ENCODE measurements at regions of chr22 and their contacts with region 1.

Region 1: GRCh38 chr22:39319270-39320022 is at the start of gene RPL3:
- DNase-seq: peak; percentile 77 to 95 (median 84)
- ATAC-seq: peak; percentile 79
- H3K4me3 ChIP-seq: peak within 1 kb of the TSS; percentile 69
- H3K27ac ChIP-seq: peak within 1 kb of the TSS; percentile 100
- H3K4me1 ChIP-seq: peaks cover 13 to 20% of the 10 kb centered on the region in 2 experiments; a peak in 4 of 5 replicates
- H3K27me3 ChIP-seq: no peaks in the 10 kb centered on the region
- CTCF ChIP-seq: 0 out of 6 replicates have a peak, but pooled peaks of 1 of the 3 experiments have one; percentile 12
- EP300 ChIP-seq: peak; percentile 25; the same call in 1 of the 2 replicates
- POLR2A ChIP-seq: peak; percentile 100
- RAD21 ChIP-seq: no peak
- polyA plus RNA-seq, gene RPL3: 3,338 to 4,066 TPM

Region 2: GRCh38 chr22:39021552-39022250 is 297.7 kb before region 1 on chr22:
- CTCF ChIA-PET with region 1: no interaction called
- POLR2A ChIA-PET with region 1: no interaction called
- in situ Hi-C with region 1: no loop called
- intact Hi-C with region 1: no loop called
- DNase-seq: peak in 1 of 4 experiments; percentile 23
- ATAC-seq: no peak
- H3K4me3 ChIP-seq: peak overlapping the region; percentile 60
- H3K27ac ChIP-seq: peak overlapping the region; percentile 79
- H3K4me1 ChIP-seq: peaks cover 13 to 46% of the 10 kb centered on the region in 2 experiments; a peak in 4 of 5 replicates
- H3K27me3 ChIP-seq: no peaks in the 10 kb centered on the region
- CTCF ChIP-seq: no peak
- EP300 ChIP-seq: no peak
- POLR2A ChIP-seq: no peak
- RAD21 ChIP-seq: no peak

Region 3: GRCh38 chr22:39135090-39135896 is 184.2 kb before region 1 on chr22:
- CTCF ChIA-PET with region 1: interaction called, 4 read pairs
- POLR2A ChIA-PET with region 1: interaction called, 20 read pairs
- in situ Hi-C with region 1: no loop called
- intact Hi-C with region 1: no loop called
- DNase-seq: peak; percentile 64 to 71 (median 70)
- ATAC-seq: peak; percentile 95
- H3K4me3 ChIP-seq: no peak overlapping the region
- H3K27ac ChIP-seq: no peak overlapping the region
- H3K4me1 ChIP-seq: peaks cover 13 to 28% of the 10 kb centered on the region in 2 experiments
- H3K27me3 ChIP-seq: no peaks in the 10 kb centered on the region
- CTCF ChIP-seq: peak; percentile 70 to 79 (median 78)
- EP300 ChIP-seq: no peak
- POLR2A ChIP-seq: no peak
- RAD21 ChIP-seq: peak; percentile 33 to 67

Region 4: GRCh38 chr22:39178206-39179111 is 141.0 kb before region 1 on chr22:
- CTCF ChIA-PET with region 1: no interaction called
- POLR2A ChIA-PET with region 1: interaction called, 24 read pairs
- in situ Hi-C with region 1: no loop called
- intact Hi-C with region 1: no loop called
- DNase-seq: no peak
- ATAC-seq: no peak
- H3K4me3 ChIP-seq: no peak overlapping the region
- H3K27ac ChIP-seq: no peak overlapping the region
- H3K4me1 ChIP-seq: peaks cover 13 to 33% of the 10 kb centered on the region in 2 experiments; a peak in 4 of 5 replicates
- H3K27me3 ChIP-seq: no peaks in the 10 kb centered on the region
- CTCF ChIP-seq: no peak
- EP300 ChIP-seq: no peak
- POLR2A ChIP-seq: no peak
- RAD21 ChIP-seq: no peak

Region 5: DNA sequence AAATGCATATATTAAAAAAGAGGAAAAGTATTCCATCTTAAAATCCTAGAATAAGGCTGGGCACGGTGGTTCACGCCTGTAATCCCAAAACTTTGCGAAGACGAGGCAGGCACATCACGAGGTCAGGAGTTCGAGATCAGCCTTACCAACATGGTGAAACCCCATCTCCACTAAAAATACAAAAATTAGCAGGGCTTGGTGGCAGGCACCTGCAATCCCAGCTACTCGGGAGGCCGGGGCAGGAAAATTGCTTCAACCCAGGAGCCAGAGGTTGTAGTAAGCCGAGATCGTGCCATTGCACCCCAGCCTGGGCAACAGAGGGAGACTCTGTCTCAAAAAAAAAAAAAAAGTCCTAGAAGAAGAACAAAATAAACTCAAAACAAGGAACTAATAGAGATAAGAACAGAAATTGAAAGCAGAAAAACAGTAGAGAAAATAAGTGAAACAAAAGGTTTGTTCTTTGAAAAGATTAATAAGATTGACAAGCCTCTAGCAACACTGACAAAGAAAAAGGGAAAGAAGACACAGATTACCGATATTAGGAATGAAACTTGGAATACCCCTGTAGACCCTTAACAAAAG is 122.0 kb before region 1 on chr22:
- CTCF ChIA-PET with region 1: no interaction called
- POLR2A ChIA-PET with region 1: no interaction called
- in situ Hi-C with region 1: no loop called
- intact Hi-C with region 1: no loop called
- DNase-seq: no peak
- ATAC-seq: no peak
- H3K4me3 ChIP-seq: no peak overlapping the region
- H3K27ac ChIP-seq: no peak overlapping the region
- H3K4me1 ChIP-seq: no peaks in the 10 kb centered on the region; a peak in 1 of 5 replicates
- H3K27me3 ChIP-seq: no peaks in the 10 kb centered on the region
- CTCF ChIP-seq: no peak
- EP300 ChIP-seq: no peak
- POLR2A ChIP-seq: no peak
- RAD21 ChIP-seq: no peak

Region 6: GRCh38 chr22:39273950-39274887 is 45.2 kb before region 1 on chr22:
- CTCF ChIA-PET with region 1: no interaction called
- POLR2A ChIA-PET with region 1: no interaction called
- in situ Hi-C with region 1: no loop called
- intact Hi-C with region 1: no loop called
- DNase-seq: peak; percentile 70 to 86 (median 80)
- ATAC-seq: peak; percentile 75
- H3K4me3 ChIP-seq: no peak overlapping the region
- H3K27ac ChIP-seq: no peak overlapping the region
- H3K4me1 ChIP-seq: peaks cover 10 to 33% of the 10 kb centered on the region in 2 experiments; a peak in 3 of 5 replicates
- H3K27me3 ChIP-seq: no peaks in the 10 kb centered on the region
- CTCF ChIP-seq: no peak
- EP300 ChIP-seq: peak; percentile 66; the same call in 1 of the 2 replicates
- POLR2A ChIP-seq: no peak
- RAD21 ChIP-seq: no peak

Region 7: GRCh38 chr22:39300186-39300830 is 19.1 kb before region 1 on chr22:
- CTCF ChIA-PET with region 1: no interaction called
- POLR2A ChIA-PET with region 1: interaction called, 59 read pairs
- in situ Hi-C with region 1: no loop called
- intact Hi-C with region 1: no loop called
- DNase-seq: no peak
- ATAC-seq: peak; percentile 73
- H3K4me3 ChIP-seq: no peak overlapping the region
- H3K27ac ChIP-seq: 0 out of 3 replicates have a peak overlapping the region, but pooled peaks have one; percentile 4
- H3K4me1 ChIP-seq: peaks cover 8 to 32% of the 10 kb centered on the region in 2 experiments; a peak in 4 of 5 replicates
- H3K27me3 ChIP-seq: no peaks in the 10 kb centered on the region
- CTCF ChIP-seq: no peak; a peak in 1 of 6 replicates
- EP300 ChIP-seq: no peak
- POLR2A ChIP-seq: no peak
- RAD21 ChIP-seq: no peak

Region 8: DNA sequence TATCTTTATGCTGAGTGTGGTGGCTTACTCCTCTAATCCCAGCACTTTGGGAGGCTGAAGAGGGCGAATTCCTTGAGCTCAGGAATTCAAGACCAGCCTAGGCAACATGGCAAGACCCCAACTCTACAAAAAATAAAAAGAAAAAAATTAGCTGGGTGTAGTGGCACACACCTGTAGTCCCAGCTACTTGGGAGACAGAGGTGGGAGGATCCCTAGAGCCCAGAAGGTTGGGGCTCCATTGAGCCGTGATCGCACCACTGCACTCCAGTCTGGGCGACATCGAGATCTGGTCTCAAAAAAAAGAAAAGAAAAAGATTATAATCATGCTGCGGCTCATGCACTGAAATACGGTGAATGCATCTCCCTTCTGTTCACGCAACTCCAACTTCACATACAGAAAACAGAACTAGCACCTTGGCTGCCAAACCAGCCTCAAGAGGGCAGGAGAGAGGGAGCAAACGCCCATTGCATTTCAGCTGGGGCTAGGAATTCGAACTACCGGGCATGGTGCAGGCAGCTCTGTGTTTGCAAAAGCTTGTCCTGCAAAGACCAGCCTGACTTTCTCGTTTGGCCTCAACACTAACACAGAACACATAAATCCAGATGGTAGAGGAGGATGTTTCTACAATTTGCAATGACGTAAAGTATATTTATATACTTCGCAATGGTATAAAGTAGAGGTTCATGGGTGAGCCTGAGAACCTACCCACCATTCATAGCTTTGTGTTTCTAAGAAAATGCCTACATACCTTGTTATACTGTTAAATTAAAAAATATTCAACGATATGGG is 24.0 kb after region 1 on chr22:
- CTCF ChIA-PET with region 1: no interaction called
- POLR2A ChIA-PET with region 1: interaction called, 20 read pairs
- in situ Hi-C with region 1: no loop called
- intact Hi-C with region 1: no loop called
- DNase-seq: peak; percentile 43 to 70 (median 56)
- ATAC-seq: peak; percentile 96
- H3K4me3 ChIP-seq: no peak overlapping the region
- H3K27ac ChIP-seq: no peak overlapping the region
- H3K4me1 ChIP-seq: peaks cover 0 to 5% of the 10 kb centered on the region in 2 experiments; a peak in 3 of 5 replicates
- H3K27me3 ChIP-seq: no peaks in the 10 kb centered on the region
- CTCF ChIP-seq: peak; percentile 65 to 77 (median 75)
- EP300 ChIP-seq: no peak
- POLR2A ChIP-seq: no peak
- RAD21 ChIP-seq: peak in 1 of 2 experiments; percentile 51; a peak in 3 of 4 replicates

Region 9: DNA sequence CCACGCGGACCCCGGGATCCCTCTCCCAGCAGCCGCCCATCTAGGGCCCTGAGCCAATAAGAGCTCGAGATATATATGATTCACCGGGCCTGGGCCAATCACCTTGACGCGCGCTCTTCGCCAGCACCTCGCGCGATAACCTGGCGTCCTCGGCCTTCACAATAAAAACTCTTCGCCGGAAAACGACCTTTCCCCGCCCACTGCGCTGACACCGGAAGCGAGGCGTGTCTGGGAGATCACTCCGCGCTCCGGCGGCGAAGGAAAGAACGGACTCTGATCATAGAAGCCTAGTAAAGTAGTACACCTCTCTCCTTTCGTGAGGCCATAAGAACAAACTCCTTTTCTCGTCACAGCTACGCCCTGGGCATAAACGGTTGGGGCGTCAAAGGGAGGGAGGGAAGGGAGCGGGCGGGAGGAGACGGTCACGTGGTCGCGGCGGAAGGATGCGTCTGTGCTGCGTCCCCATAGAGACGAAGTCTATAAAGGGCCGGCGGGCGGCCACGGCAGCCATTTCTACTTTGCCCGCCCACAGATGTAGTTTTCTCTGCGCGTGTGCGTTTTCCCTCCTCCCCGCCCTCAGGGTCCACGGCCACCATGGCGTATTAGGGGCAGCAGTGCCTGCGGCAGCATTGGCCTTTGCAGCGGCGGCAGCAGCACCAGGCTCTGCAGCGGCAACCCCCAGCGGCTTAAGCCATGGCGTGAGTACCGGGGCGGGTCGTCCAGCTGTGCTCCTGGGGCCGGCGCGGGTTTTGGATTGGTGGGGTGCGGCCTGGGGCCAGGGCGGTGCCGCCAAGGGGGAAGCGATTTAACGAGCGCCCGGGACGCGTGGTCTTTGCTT is 200.8 kb after region 1 on chr22 and contains the start of gene ATF4:
- CTCF ChIA-PET with region 1: no interaction called
- POLR2A ChIA-PET with region 1: interaction called, 58 read pairs
- in situ Hi-C with region 1: no loop called
- intact Hi-C with region 1: loop called (anchors 2 kb)
- DNase-seq: peak; percentile 88 to 97 (median 92)
- ATAC-seq: peak; percentile 87
- H3K4me3 ChIP-seq: peak within 1 kb of the TSS; percentile 99
- H3K27ac ChIP-seq: peak within 1 kb of the TSS; percentile 100
- H3K4me1 ChIP-seq: peaks cover 23 to 34% of the 10 kb centered on the region in 2 experiments; a peak in 4 of 5 replicates
- H3K27me3 ChIP-seq: no peaks in the 10 kb centered on the region
- CTCF ChIP-seq: no peak
- EP300 ChIP-seq: no peak; the same call in 1 of the 2 replicates
- POLR2A ChIP-seq: peak; percentile 99
- RAD21 ChIP-seq: no peak; a peak in 1 of 4 replicates
- polyA plus RNA-seq, gene ATF4: 93.1 to 125 TPM

Region 10: DNA sequence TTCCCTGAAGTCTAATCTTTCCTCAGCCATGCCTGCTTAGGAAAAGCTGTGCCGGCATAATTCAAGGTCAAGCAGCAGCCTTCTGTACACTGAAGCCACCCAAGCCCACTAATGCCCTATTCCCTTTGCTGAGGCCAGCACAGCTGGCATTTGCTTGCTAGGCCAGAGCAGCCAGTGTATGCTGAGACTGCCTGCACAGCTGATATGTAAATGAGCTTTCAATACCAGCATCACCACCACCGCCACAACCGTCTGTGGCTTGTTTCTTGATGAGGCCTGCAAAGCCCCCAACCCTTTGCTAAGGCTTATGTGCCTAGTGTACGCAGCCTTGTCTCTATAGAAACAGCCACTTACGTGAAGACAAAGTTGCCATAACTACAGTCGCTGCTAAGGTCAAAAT is 802.0 kb after region 1 on chr22:
- CTCF ChIA-PET with region 1: no interaction called
- POLR2A ChIA-PET with region 1: no interaction called
- in situ Hi-C with region 1: no loop called
- intact Hi-C with region 1: no loop called
- DNase-seq: no peak
- ATAC-seq: no peak
- H3K4me3 ChIP-seq: no peak overlapping the region
- H3K27ac ChIP-seq: no peak overlapping the region
- H3K4me1 ChIP-seq: peaks cover 0 to 11% of the 10 kb centered on the region in 2 experiments; a peak in 1 of 5 replicates
- H3K27me3 ChIP-seq: no peaks in the 10 kb centered on the region
- CTCF ChIP-seq: no peak
- EP300 ChIP-seq: no peak
- POLR2A ChIP-seq: no peak
- RAD21 ChIP-seq: no peak